Activated CD8-positive, alpha-beta T cell treated with anti-CD3 and anti-CD28 coated beads, Interleukin-2, amount 10 ng/mL, durations not matched to agents 7 days and 5 days (primary cell): ENCODE measurements at regions of chr22 and their contacts with region 1.

Region 1: DNA sequence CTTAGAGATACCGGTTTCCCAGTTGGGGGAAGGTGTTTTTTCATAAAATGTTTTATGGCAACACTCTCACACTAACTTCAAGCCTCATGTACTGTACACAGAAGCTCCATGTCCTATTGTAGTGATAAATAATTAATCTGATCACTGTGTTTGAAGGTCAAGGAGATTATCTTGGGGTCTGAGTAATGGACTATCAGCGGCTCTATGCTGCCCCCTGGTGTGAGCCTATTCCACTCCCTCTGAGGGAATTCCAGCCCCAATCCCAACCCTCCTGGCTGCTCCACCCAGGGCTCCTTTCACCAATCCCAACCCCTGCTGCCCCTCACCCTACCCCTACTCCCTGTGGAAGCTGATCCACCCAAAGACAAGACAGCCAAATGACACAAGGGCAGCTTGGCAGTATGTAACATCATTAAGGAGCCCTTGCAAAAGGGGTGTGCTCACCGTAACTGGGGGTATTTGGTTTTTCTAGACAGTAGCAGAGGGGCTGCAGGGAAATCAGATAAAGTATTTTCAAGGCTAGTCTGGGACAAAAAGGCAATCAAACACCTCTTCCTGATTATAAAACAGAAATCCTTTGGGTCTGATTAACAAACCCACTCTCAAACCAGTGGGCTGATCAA is 22.3 kb downstream of the HPS4 start:
- DNase-seq: peak; percentile 46
- ATAC-seq: no peak
- H3K4me3 Mint-ChIP-seq: no peak overlapping the region
- H3K27ac Mint-ChIP-seq: no peak overlapping the region
- H3K4me1 Mint-ChIP-seq: no peaks in the 10 kb centered on the region
- H3K27me3 Mint-ChIP-seq: no peaks in the 10 kb centered on the region

Region 2: DNA sequence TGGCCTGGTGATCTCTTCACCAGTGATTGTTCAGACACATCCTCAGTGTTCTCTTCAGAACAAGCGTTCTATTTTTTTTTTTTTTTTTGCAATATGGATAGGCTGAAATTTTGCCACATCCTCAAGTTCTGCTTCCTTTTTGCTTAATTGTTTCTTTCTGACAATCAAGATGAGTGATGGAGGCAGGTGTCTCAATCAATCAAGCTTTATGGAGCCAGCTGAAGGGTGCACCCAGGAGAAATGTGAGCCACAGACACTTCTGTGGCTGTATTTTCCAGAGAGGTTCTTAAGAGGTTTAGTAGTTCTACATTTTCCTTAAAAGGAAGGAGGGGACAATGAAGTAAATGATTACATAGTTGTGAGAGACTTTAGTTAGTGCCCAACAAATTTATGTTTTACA is 76.1 kb before region 1 on chr22:
- CTCF ChIA-PET with region 1: interaction called, 17 read pairs
- POLR2A ChIA-PET with region 1: no interaction called
- DNase-seq: no peak
- ATAC-seq: no peak
- H3K4me3 Mint-ChIP-seq: no peak overlapping the region
- H3K27ac Mint-ChIP-seq: no peak overlapping the region
- H3K4me1 Mint-ChIP-seq: no peaks in the 10 kb centered on the region
- H3K27me3 Mint-ChIP-seq: peaks cover 41% of the 10 kb centered on the region

Region 3: DNA sequence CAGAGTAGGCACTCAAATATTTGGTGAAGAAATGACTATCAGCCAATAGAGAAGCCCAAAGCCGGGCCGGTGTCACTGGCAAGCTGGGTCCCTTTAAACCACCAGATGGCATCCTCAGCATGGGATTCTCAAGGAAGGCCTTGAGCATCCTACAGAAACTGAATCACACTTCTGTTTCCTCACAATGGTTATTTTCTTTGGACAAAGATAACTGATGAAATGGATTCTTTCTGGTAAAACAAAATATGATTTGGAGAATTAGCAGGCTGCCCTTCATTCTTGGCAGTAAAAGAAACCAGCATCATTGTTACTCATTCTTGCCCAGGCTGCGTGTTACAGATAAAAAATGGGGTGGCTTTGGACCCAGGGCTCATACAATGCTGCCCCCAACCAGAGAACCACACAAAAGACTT is 62.6 kb before region 1 on chr22:
- CTCF ChIA-PET with region 1: interaction called, 52 read pairs
- POLR2A ChIA-PET with region 1: no interaction called
- DNase-seq: peak; percentile 66
- ATAC-seq: peak; percentile 85
- H3K4me3 Mint-ChIP-seq: no peak overlapping the region
- H3K27ac Mint-ChIP-seq: no peak overlapping the region
- H3K4me1 Mint-ChIP-seq: peaks cover 1% of the 10 kb centered on the region
- H3K27me3 Mint-ChIP-seq: peaks cover 2% of the 10 kb centered on the region

Region 4: GRCh38 chr22:26404851-26405421 is 56.4 kb before region 1 on chr22:
- CTCF ChIA-PET with region 1: interaction called, 10 read pairs
- POLR2A ChIA-PET with region 1: no interaction called
- DNase-seq: no peak
- ATAC-seq: no peak
- H3K4me3 Mint-ChIP-seq: no peak overlapping the region
- H3K27ac Mint-ChIP-seq: no peak overlapping the region
- H3K4me1 Mint-ChIP-seq: peaks cover 10% of the 10 kb centered on the region
- H3K27me3 Mint-ChIP-seq: peaks cover 14% of the 10 kb centered on the region

Region 5: DNA sequence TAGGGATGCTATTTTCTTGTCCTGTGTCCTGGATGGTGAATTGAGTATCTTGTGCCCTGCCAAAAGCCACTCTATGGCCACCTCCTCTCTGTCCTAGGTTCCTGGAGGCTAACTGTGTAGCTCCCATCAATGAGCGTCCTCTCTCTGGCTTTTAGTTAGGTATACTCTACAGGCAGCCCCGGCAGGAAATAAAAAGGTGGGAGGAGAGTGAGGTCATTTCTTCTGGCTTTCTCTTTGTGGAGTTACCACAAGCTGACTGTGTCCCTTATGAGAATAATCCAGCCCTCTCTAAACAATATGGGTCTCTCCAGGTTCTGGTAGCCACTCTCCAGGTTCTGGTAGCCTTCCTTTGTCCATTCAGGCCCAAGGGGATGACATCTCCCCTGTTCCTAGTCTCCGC is 43.9 kb before region 1 on chr22:
- CTCF ChIA-PET with region 1: no interaction called
- POLR2A ChIA-PET with region 1: no interaction called
- DNase-seq: no peak
- ATAC-seq: no peak
- H3K4me3 Mint-ChIP-seq: no peak overlapping the region
- H3K27ac Mint-ChIP-seq: no peak overlapping the region
- H3K4me1 Mint-ChIP-seq: no peaks in the 10 kb centered on the region
- H3K27me3 Mint-ChIP-seq: peaks cover 43% of the 10 kb centered on the region

Region 6: GRCh38 chr22:26428515-26429457 is 32.5 kb before region 1 on chr22 and contains the start of gene ASPHD2:
- CTCF ChIA-PET with region 1: interaction called, 24 read pairs
- POLR2A ChIA-PET with region 1: no interaction called
- DNase-seq: peak; percentile 83
- ATAC-seq: peak; percentile 90
- H3K4me3 Mint-ChIP-seq: peak within 1 kb of the TSS; percentile 94
- H3K27ac Mint-ChIP-seq: peak within 1 kb of the TSS; percentile 99
- H3K4me1 Mint-ChIP-seq: peaks cover 51% of the 10 kb centered on the region
- H3K27me3 Mint-ChIP-seq: peaks cover 15% of the 10 kb centered on the region
- total RNA-seq, gene ASPHD2: 9.2 to 10.0 TPM

Region 7: DNA sequence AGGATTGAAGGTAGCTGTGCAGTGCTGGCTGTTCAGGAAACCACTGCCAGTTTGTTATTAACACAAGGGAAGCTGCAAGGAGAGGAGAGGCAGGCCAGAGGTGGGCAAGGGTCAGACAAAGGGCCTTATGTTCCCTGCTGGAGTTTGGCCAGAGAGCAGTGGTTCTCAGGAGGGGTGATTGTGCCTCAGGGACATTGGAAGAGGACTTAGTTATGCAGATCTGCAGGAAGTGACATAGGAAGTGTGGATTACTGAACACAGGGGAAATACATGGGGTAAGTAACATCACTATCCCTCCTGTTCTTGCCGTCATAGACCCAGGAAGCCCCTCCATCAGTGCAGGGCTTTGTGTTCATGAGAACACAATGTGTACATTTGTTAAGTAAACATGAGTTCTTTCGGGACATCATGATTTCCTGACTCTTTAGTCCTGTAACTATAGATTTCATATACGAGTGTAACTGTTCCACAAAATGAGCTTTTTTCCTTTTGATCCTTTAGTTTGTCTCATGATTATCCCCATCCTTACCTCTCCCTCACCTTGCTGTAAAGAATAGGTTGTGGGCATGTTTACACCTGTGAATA is 28.2 kb after region 1 on chr22:
- CTCF ChIA-PET with region 1: no interaction called
- POLR2A ChIA-PET with region 1: no interaction called
- DNase-seq: no peak
- ATAC-seq: no peak
- H3K4me3 Mint-ChIP-seq: no peak overlapping the region
- H3K27ac Mint-ChIP-seq: peak overlapping the region; percentile 60
- H3K4me1 Mint-ChIP-seq: peaks cover 35% of the 10 kb centered on the region
- H3K27me3 Mint-ChIP-seq: no peaks in the 10 kb centered on the region